ENCODE measurements at regions of chr7 and their contacts with region 1.

Region 1: DNA sequence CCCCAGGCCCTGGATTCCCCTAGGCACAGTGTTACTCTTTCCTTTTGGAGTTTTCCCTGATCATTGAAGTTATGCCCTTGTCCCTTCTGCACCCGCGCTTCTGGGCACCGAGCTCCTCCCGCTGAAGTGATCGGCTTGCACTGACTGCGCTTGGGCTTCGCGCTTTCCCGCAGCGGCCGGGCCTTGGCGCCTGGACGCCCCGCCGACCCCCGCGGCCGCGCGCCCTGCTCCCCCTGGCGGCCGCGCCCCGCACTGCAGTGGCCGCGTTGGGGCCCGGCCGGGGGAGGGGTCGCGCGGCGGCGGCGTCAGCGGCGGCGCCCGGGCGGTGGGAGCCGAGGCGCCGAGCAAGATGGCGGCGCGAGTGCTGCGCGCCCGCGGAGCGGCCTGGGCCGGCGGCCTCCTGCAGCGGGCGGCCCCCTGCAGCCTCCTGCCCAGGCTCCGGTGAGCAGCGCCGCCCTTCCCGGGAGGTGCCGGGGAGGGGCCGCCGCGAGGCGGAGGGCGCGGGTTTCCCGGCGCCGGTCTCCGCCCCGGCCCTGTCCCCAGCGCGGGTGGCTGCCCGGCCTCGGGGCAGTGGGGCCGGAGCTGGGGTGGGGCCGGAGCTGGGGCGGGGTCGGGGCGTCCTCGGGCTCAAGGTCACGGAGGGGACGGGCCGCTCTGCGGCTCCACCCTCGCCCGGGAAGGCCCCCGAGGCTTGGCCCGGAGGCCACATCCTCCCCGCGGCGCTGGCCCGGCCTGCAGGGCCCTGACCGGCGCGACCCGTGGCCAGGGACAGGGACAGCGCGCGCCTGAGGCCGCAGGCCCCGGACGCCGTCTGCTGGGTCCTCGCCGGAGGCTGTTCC is at the start of gene NIPSNAP2:
- H3K4me3 Mint-ChIP-seq: peak within 1 kb of the TSS; percentile 93
- H3K27ac Mint-ChIP-seq: peak within 1 kb of the TSS; percentile 95
- H3K4me1 Mint-ChIP-seq: peaks cover 37% of the 10 kb centered on the region
- H3K27me3 Mint-ChIP-seq: peaks cover 14% of the 10 kb centered on the region

Region 2: GRCh38 chr7:55641273-55641691 is 323.2 kb before region 1 on chr7:
- intact Hi-C with region 1: loop called (anchors 1 kb)
- H3K4me3 Mint-ChIP-seq: no peak overlapping the region
- H3K27ac Mint-ChIP-seq: no peak overlapping the region
- H3K4me1 Mint-ChIP-seq: no peaks in the 10 kb centered on the region
- H3K27me3 Mint-ChIP-seq: peaks cover 2% of the 10 kb centered on the region

Region 3: DNA sequence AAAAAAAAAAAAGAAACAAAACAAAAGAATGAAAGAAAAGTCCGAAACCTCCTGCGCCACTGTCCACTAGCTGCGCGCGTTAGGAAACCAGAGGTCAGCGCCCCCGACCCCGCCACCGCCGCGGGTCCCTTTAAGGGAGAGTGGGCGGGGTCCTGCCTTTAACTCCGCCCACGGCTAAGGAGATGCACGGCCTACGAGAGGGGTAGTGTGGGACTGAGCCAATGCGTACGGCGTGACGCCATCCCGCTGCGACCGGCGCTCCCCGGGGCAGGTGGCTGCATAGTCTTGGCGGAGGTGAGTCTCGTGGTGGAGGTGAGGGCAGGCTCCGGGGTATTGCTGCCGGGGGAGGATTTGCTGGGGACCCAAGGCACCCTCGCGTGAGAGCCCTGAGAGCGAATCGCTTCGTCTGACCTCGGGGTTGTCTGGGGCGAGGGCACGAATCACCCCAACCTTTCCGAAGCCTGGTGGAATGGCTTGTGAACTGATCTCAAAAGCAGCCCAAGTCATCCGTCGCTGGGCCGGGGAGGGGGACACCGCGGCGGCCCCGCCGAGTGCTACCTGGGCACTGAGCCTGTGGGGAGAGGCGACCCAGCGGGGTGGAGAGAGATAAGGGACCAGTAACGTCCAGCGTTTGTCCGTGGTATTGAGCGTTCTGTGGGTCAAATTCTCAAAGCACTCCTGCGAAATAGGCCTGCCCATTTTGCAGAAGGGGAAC is 12.7 kb before region 1 on chr7 and contains the start of gene MRPS17:
- intact Hi-C with region 1: loop called (anchors 1 kb)
- H3K4me3 Mint-ChIP-seq: peak within 1 kb of the TSS; percentile 98
- H3K27ac Mint-ChIP-seq: peak within 1 kb of the TSS; percentile 96
- H3K4me1 Mint-ChIP-seq: peaks cover 9% of the 10 kb centered on the region
- H3K27me3 Mint-ChIP-seq: peaks cover 3% of the 10 kb centered on the region

Region 4: DNA sequence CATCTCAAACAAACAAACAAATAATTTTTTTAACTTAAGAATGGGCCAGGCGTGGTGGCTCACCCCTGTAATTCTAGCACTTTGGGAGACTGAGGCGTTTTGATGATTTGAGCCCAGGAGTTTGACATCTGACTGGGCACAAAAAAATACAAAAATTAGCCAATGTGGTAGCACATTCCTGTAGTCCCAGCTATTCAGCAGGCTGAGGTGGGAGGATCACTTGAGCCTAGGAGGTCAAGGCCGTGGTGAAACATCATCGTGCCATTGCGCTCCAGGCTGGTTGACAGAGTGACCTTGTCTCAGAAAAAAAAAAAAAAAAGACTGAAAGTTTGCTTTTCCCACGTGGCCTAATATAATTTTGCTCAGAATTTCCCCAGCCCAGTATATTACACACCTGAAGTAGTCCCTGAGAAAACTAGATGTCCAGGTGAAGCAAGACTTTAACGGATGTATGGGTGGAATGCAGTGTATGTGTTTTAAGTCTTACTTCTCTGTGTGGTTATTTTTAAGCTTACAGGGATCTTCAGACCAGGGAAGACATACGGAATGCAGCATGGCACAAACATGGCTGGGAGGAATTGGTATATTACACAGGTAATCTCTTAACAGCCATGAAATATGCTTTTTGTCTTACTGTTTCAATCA is 32.5 kb after region 1 on chr7:
- intact Hi-C with region 1: loop called (anchors 2 kb)
- H3K4me3 Mint-ChIP-seq: no peak overlapping the region
- H3K27ac Mint-ChIP-seq: peak overlapping the region; percentile 22
- H3K4me1 Mint-ChIP-seq: peaks cover 23% of the 10 kb centered on the region
- H3K27me3 Mint-ChIP-seq: no peaks in the 10 kb centered on the region

Measured in dendritic cell treated with granulocyte-macrophage colony-stimulating factor and Interleukin-4, amounts not matched to agents 40 ng/mL and 50 ng/mL, for 4 days (primary cell).